Naive thymus-derived CD8-positive, alpha-beta T cell (primary cell): ENCODE measurements at regions of chr11 and their contacts with region 1.

Region 1: DNA sequence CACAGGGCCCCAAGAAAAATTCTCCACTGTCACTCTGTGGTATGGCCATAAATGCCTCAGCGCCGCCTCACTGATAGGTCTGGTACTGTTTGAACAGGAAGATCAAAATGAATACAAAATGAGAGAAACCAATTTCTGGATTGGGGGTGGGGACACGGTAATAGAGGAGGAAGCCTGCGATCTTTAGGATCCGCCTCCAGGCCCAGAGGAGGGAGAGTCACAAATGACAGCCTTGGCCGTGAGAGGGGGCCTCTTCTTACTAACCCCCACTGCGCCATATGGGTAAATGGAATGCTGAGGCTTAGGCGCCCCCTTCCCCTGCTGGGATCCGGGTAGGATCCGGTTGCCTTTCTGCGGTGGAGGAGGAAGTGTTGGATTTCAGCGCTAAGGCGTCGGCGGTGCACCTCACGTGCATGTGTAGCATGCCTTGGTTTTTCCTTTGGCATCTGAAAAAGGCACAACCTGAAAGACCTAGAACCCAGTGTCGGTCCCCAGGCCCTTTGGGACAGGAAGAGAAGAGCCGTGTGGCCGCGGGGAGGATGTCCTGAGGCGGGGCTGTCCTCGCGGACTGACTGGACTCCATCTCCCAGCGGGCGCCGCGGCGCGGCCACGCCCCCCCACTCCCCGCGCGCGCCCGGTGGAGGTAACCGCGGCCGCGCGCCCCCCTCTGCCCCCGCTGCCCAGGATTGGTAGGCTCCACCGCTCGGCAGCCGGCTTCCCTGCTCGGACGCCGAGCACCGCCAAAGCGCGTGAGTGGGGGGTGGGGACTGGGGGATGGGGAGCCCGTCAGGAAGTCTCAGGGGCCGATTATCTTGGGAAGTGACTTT is 718 bp upstream of the MADD start:
- DNase-seq: peak; percentile 73 to 91 (median 82)
- ATAC-seq: peak; percentile 56 to 59
- H3K4me3 Mint-ChIP-seq: peak overlapping the region; percentile 75 to 98 (median 90)
- H3K27ac Mint-ChIP-seq: peak overlapping the region; percentile 90 to 99 (median 96)
- H3K4me1 Mint-ChIP-seq: peaks cover 30 to 75% (median 60%) of the 10 kb centered on the region in 4 donors
- H3K27me3 Mint-ChIP-seq: no peaks in the 10 kb centered on the region

Region 2: DNA sequence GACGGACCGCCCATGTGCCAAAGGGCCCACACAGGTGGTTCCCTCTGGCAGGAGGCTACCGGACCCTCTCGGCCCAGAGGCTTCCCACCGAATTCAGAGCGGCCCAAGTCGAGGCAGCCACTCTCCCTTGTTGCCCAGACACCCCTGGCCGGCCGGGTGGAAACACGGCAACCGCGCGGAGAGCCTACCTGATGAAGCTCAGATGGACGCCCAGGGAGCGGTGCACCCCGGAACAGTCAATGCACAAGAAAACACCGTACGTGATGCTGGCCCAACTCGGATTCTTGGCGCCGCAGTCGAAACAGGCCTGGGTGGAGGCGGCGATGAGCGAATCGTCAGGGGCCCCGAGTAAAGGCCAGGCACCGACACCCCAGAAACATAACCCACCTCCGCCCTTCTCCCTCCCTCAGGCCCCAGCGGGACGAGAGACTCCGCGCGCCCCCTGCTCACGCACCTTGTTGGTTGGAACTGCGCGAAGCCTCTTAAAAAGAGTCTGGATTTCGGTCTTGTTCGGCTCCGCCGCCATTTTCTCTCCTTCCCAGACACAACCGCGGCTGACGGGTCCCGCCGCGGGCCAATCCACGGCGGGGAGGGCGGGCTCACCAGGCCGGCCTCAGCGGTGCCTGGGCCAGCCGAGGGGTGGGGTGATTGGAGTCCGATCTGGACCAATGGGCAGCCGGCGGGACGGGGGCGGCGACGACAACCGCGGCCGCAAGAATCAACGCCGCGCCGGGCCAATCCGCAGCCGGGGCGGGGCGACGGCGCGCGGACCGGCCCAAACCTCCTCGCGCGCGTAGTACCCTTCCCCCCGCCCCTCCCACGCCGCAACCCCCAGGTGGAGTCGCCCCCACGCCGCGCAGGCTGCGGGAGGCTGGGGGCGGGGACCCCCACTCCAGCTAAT is 92.6 kb before region 1 on chr11 and contains the start of gene ARFGAP2:
- POLR2A ChIA-PET with region 1: interaction called, 15 read pairs
- DNase-seq: peak; percentile 92 to 97 (median 95)
- ATAC-seq: peak; percentile 92 to 93
- H3K4me3 Mint-ChIP-seq: peak within 1 kb of the TSS; percentile 91 to 99 (median 97)
- H3K27ac Mint-ChIP-seq: peak within 1 kb of the TSS; percentile 97 to 100 (median 100)
- H3K4me1 Mint-ChIP-seq: peaks cover 22 to 53% (median 52%) of the 10 kb centered on the region in 4 donors
- H3K27me3 Mint-ChIP-seq: peaks cover 0 to 4% (median 0%) of the 10 kb centered on the region in 5 donors
- polyA plus RNA-seq, gene ARFGAP2: 97.8 to 111 (median 108) TPM